ENCODE measurements at regions of chr6 and their contacts with region 1.

Region 1: DNA sequence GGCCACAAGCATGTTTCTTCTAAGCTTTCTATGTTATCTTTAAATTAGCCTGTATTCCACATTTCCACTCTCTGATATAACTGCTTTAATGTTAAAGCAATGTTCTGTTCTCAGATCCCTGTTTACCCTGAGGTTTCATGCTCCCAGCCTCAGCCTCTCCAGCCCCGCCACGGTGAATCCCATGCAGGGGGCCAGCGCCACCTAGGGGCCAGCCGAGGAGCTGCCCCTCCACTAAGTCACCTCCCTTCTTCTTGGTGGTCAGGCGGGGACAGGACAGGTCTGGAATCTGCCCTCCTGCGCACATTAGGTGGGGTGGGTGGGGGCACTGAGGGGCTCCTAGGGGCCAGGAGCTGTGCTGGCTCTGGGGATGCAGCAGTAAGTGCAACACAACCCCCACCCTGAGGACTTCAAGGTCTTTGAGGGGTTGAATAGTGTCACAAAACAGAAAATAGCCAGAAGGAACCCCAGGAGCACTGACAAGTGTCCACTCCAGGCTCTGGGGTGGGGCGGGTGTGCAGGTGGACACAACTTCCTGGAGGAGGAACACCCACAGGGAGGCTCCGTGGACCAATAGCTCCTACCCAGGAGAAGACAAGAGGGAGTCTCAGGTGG is 61.6 kb downstream of the RAB44 start:
- DNase-seq: peak; percentile 88
- ATAC-seq: peak; percentile 92
- H3K4me3 Mint-ChIP-seq: no peak overlapping the region
- H3K27ac Mint-ChIP-seq: 0 out of 2 replicates have a peak overlapping the region, but pooled peaks have one; percentile 5
- H3K4me1 Mint-ChIP-seq: peaks cover 15% of the 10 kb centered on the region
- H3K27me3 Mint-ChIP-seq: no peaks in the 10 kb centered on the region
- CTCF ChIP-seq: peak; percentile 99

Region 2: GRCh38 chr6:36615018-36615761 is 144.1 kb before region 1 on chr6:
- CTCF ChIA-PET with region 1: interaction called, 17 read pairs
- POLR2A ChIA-PET with region 1: no interaction called
- DNase-seq: peak; percentile 33
- ATAC-seq: peak; percentile 43
- H3K4me3 Mint-ChIP-seq: no peak overlapping the region
- H3K27ac Mint-ChIP-seq: peak overlapping the region; percentile 74; the same call in 1 of the 2 replicates
- H3K4me1 Mint-ChIP-seq: peaks cover 10% of the 10 kb centered on the region; the same call in 1 of the 2 replicates
- H3K27me3 Mint-ChIP-seq: no peaks in the 10 kb centered on the region
- CTCF ChIP-seq: peak; percentile 74

Region 3: DNA sequence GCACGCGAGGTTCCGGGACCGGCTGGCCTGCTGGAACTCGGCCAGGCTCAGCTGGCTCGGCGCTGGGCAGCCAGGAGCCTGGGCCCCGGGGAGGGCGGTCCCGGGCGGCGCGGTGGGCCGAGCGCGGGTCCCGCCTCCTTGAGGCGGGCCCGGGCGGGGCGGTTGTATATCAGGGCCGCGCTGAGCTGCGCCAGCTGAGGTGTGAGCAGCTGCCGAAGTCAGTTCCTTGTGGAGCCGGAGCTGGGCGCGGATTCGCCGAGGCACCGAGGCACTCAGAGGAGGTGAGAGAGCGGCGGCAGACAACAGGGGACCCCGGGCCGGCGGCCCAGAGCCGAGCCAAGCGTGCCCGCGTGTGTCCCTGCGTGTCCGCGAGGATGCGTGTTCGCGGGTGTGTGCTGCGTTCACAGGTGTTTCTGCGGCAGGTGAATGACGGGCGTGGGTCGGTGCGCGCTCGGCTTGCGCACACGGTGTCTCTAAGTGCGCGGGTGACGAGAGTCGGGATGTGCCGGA is 80.7 kb before region 1 on chr6 and contains the start of gene CDKN1A:
- CTCF ChIA-PET with region 1: interaction called, 12 read pairs
- POLR2A ChIA-PET with region 1: no interaction called
- DNase-seq: peak; percentile 86
- ATAC-seq: peak; percentile 90
- H3K4me3 Mint-ChIP-seq: peak within 1 kb of the TSS; percentile 92
- H3K27ac Mint-ChIP-seq: peak within 1 kb of the TSS; percentile 81
- H3K4me1 Mint-ChIP-seq: peaks cover 52% of the 10 kb centered on the region
- H3K27me3 Mint-ChIP-seq: peaks cover 35% of the 10 kb centered on the region
- CTCF ChIP-seq: no peak
- total RNA-seq, gene CDKN1A: 35.9 to 75.1 TPM (median 38.1 TPM) in 3 replicates

Region 4: GRCh38 chr6:36724514-36725390 is 34.5 kb before region 1 on chr6:
- CTCF ChIA-PET with region 1: interaction called, 15 read pairs
- POLR2A ChIA-PET with region 1: no interaction called
- DNase-seq: peak; percentile 84
- ATAC-seq: peak; percentile 93
- H3K4me3 Mint-ChIP-seq: no peak overlapping the region
- H3K27ac Mint-ChIP-seq: no peak overlapping the region
- H3K4me1 Mint-ChIP-seq: peaks cover 2% of the 10 kb centered on the region; the same call in 1 of the 2 replicates
- H3K27me3 Mint-ChIP-seq: peaks cover 2% of the 10 kb centered on the region; the same call in 1 of the 2 replicates
- CTCF ChIP-seq: peak; percentile 27; the same call in 1 of the 2 replicates

Region 5: DNA sequence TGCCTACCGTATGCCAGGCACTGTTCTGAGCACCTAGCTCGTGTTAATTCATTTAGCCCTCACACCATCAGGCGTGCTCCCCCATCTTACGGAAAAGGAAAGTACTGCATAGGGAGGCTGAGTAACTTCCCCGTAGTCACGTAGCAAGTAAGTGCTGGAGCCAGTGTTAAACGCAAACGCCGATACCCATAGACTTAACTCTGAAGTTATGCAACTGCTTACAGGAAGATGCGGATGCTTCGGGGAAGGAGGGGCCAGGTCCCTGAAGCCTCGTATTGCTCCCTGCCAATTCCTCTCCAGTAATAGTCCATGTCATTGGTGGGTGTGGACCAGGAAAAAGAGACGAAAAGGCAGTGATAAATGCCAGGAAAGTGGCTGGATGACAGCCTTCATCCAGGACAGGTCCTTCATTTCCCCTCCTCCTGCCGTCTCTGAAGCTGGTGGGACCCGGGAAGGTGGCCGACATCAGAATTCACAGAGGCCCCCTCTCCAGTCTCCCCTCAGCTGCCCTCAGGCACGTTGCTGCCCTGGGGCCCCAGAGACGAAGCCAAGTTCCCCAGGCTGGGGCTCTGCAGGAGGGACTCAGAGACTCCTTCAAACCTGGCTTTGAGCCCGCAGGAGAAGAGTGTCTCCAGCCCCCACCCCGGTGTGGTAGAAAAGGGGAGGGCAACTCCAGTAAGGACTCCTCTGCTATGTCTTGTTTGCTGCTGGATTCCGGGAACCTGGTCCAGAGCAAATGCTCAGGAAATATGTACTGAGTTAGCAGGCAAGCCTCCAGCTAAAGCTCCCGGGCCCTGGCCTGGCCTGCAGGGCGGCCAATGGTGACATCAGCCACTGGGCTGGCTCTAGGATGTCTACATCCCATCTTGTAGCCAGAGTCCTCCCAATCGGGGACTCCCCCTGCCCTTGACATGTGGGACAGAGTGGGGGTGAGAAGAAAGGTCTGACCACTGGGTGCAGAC is 23.9 kb before region 1 on chr6:
- CTCF ChIA-PET with region 1: interaction called, 16 read pairs
- POLR2A ChIA-PET with region 1: interaction called, 3 read pairs
- DNase-seq: no peak
- ATAC-seq: peak; percentile 26
- H3K4me3 Mint-ChIP-seq: no peak overlapping the region
- H3K27ac Mint-ChIP-seq: no peak overlapping the region
- H3K4me1 Mint-ChIP-seq: peaks cover 16% of the 10 kb centered on the region
- H3K27me3 Mint-ChIP-seq: no peaks in the 10 kb centered on the region
- CTCF ChIP-seq: no peak

Region 6: DNA sequence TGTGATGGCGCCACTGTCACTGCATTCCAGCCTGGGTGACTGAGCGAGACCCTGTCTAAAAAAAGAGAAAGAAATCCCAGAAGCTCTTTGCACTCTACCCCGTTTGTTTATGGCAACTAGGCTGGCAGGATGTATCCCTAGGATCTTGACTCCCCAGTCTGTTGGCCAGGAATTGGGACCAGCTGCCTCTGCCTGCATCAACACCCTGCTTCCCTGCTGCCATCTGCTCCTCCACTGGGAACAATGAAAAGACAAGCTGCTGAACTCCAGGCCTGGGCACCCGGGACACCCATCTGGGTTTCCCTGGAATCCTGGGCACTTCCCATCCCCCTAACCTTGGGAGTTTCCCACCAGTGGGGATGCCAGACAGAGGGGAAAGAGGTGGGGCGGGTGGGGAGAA is 15.1 kb after region 1 on chr6:
- CTCF ChIA-PET with region 1: interaction called, 454 read pairs
- POLR2A ChIA-PET with region 1: no interaction called
- DNase-seq: no peak
- ATAC-seq: no peak
- H3K4me3 Mint-ChIP-seq: no peak overlapping the region
- H3K27ac Mint-ChIP-seq: no peak overlapping the region
- H3K4me1 Mint-ChIP-seq: peaks cover 28% of the 10 kb centered on the region
- H3K27me3 Mint-ChIP-seq: no peaks in the 10 kb centered on the region
- CTCF ChIP-seq: no peak

Region 7: GRCh38 chr6:36874443-36875249 is 115.4 kb after region 1 on chr6 and contains the start of gene PPIL1:
- CTCF ChIA-PET with region 1: interaction called, 17 read pairs
- POLR2A ChIA-PET with region 1: no interaction called
- DNase-seq: peak; percentile 74
- ATAC-seq: peak; percentile 87
- H3K4me3 Mint-ChIP-seq: peak within 1 kb of the TSS; percentile 93
- H3K27ac Mint-ChIP-seq: peak within 1 kb of the TSS; percentile 100
- H3K4me1 Mint-ChIP-seq: peaks cover 19% of the 10 kb centered on the region
- H3K27me3 Mint-ChIP-seq: peaks cover 17% of the 10 kb centered on the region
- CTCF ChIP-seq: no peak
- total RNA-seq, gene PPIL1: 64.2 to 69.8 TPM (median 66.6 TPM) in 3 replicates

Region 8: DNA sequence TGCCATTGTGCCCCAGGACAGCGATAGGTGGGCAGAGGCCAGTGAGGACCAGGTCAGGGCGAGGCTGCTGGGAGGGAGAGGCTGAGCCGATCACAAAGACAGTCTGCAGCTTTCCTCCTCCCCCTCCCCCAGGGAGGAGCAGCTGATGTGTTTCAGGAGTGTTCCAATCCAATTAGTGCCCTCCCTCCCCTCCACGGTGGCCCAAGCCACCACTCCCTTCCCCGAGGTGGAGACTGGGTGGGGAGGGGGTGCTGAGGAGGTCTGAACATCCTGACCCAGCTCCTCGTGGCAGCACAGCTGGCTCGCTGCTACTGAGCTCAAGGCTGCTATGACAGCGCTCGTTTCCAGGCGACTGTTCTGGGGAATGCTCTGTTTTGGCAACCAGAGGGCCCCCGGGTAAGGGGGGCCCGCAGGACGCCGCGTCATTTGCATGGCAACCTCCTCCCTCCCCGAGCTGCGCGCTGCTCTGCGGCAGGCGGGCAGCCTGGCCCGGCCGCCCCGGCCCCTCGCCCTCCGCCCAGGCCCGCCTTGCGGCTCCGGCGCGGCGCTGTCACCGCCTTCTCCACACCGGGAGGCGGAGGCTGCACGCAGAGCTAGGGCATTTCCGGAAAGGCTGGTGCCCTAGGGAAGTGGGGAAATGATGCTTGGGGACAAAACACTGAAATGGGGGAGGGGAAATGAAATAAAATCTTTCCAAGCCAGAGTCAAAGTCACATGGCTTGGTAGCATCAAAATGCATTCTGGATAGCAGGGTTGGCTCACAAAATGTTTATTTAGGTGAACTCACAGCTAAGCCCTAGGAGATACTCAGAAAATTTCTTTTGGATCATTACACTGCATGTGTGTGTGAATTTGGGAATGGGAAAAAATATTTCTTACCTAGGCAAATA is 343.3 kb after region 1 on chr6:
- CTCF ChIA-PET with region 1: no interaction called
- POLR2A ChIA-PET with region 1: no interaction called
- DNase-seq: peak; percentile 92
- ATAC-seq: peak; percentile 80
- H3K4me3 Mint-ChIP-seq: peak overlapping the region; percentile 66
- H3K27ac Mint-ChIP-seq: peak overlapping the region; percentile 94
- H3K4me1 Mint-ChIP-seq: peaks cover 62% of the 10 kb centered on the region
- H3K27me3 Mint-ChIP-seq: no peaks in the 10 kb centered on the region; the same call in 1 of the 2 replicates
- CTCF ChIP-seq: no peak

Measured in WTC11 (cell line).